ENCODE measurements at regions of chr7 and their contacts with region 1.

Region 1: DNA sequence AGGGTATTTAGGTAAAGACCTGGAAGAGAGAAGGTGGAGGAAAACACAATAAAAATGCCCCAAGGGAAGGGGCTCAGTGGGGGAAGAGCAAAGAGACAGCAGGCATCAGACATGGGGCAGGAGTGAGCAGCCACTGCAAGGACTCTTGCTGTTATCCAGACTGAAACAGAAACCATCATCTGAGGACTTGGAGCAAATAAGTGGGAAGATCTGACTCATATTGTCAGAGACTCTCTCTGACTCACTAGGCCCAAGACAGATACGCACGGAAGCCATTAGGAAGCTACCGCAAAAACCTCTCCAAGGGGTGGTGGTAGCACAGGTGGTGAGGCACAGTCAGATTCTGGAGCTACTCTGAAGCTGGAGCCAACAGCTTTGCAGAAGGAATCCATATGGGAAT is 110.7 kb downstream of the RNF32 start:
- DNase-seq: no peak
- H3K4me3 ChIP-seq: no peak overlapping the region
- CTCF ChIP-seq: no peak
- POLR2A ChIP-seq: no peak

Region 2: GRCh38 chr7:157961731-157962457 is 1210.6 kb after region 1 on chr7:
- intact Hi-C with region 1: loop called (anchors 5 kb)
- DNase-seq: peak in 1 of 2 donors; percentile 56
- H3K4me3 ChIP-seq: no peak overlapping the region
- CTCF ChIP-seq: no peak
- POLR2A ChIP-seq: no peak

Measured in lower leg skin (tissue), 4 donors.